ENCODE measurements at regions of chr1 and their contacts with region 1.

Region 1: DNA sequence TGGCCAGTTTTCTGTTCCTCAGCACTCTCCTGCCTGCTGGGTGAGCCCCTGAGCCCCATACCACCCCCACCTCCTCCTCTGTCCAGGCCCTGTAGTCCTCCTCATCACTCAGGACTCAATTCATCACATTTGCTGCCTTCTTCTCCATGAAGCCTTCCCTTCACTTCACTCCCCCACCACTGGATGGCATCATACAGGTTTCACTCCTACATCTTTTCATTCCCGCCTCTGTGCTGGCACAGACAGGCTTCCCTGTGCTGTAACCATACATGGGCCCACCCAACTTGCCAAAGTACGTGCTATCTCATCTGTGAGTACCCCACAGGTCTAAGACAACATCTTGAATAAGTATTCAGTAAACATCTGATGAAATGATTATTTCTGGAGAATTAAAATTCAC is 56.9 kb downstream of the SLC45A1 start:
- DNase-seq: no peak
- H3K4me3 ChIP-seq: no peak overlapping the region
- H3K27ac ChIP-seq: peak overlapping the region; percentile 74 to 82
- H3K4me1 ChIP-seq: peaks cover 6 to 83% (median 69%) of the 10 kb centered on the region in 4 donors
- H3K27me3 ChIP-seq: no peaks in the 10 kb centered on the region
- CTCF ChIP-seq: no peak

Region 2: DNA sequence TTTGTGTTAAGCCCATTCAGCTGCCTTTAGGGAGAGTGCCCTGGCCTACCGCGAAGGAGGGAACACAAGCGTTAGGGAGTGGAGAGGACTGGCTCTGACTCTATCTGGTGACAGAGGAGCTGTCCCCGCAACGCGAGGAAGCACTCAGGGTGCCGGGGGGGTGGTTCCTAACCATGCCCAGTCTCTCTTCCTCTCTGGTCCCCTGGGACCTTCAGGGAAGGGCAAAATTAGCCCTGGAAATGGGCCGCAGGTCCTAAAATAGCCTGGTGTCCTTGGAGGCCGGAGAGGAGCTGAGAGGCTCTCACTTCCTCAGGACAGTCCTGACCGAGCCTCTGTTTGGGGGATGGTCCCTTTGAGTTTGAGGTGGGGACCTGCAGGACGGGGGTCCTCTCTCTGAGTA is 51.1 kb before region 1 on chr1:
- intact Hi-C with region 1: no loop called
- DNase-seq: peak in 1 of 2 donors; percentile 91
- H3K4me3 ChIP-seq: peak overlapping the region in 1 of 2 donors; percentile 1
- H3K27ac ChIP-seq: peak overlapping the region; percentile 69 to 72
- H3K4me1 ChIP-seq: peaks cover 0 to 29% (median 12%) of the 10 kb centered on the region in 4 donors
- H3K27me3 ChIP-seq: no peaks in the 10 kb centered on the region
- CTCF ChIP-seq: no peak

Region 3: DNA sequence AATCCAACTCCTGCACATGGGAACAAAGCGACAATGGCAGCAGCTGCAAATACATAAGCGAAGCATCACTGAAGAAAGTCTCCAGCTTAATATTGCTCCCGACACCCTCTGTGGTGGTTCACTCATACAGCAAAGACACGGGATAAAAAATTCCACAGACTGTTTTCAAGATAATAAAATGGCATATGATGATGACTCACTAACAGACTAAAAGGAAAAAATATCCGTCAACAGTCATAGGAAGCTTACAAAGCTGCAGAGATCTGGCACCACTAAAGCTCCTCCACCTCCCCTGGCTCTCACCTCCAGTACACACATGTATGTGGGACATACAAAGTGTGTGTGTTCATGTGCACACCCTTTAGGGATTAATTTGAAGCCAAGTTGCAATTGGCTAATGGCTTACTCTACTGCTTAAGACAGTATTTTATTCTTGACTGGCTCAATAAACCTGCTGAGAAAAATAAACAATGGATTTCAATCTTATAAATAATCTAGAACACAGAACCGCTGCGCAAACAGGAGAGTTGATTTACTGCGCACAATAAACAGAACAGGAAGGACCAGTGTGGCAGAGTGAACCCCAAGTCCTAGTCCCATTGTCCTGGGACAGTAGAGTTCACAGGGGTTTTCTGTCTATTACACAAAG is 37.5 kb after region 1 on chr1:
- intact Hi-C with region 1: loop called (anchors 5 kb)
- DNase-seq: peak; percentile 60 to 77
- H3K4me3 ChIP-seq: peak overlapping the region in 1 of 2 donors; percentile 18
- H3K27ac ChIP-seq: peak overlapping the region; percentile 79 to 99
- H3K4me1 ChIP-seq: peaks cover 2 to 100% (median 84%) of the 10 kb centered on the region in 4 donors
- H3K27me3 ChIP-seq: no peaks in the 10 kb centered on the region
- CTCF ChIP-seq: peak in 1 of 2 experiments; percentile 30

Region 4: GRCh38 chr1:8571200-8571984 is 196.6 kb after region 1 on chr1:
- intact Hi-C with region 1: loop called (anchors 5 kb)
- DNase-seq: peak in 1 of 2 donors; percentile 32
- H3K4me3 ChIP-seq: no peak overlapping the region
- H3K27ac ChIP-seq: peak overlapping the region; percentile 57 to 59
- H3K4me1 ChIP-seq: peaks cover 0 to 26% (median 8%) of the 10 kb centered on the region in 4 donors
- H3K27me3 ChIP-seq: no peaks in the 10 kb centered on the region
- CTCF ChIP-seq: peak; percentile 67 to 69